Mammary epithelial cell (primary cell): ENCODE measurements at regions of chr14 and their contacts with region 1.

Region 1: GRCh38 chr14:100383727-100384158 is 60.6 kb downstream of the SLC25A47 start:
- DNase-seq: peak; percentile 35
- H3K4me3 ChIP-seq: no peak overlapping the region
- H3K27ac ChIP-seq: no peak overlapping the region
- H3K4me1 ChIP-seq: peaks cover 17% of the 10 kb centered on the region
- H3K27me3 ChIP-seq: no peaks in the 10 kb centered on the region
- CTCF ChIP-seq: peak; percentile 88 to 91

Region 2: GRCh38 chr14:100317912-100318808 is 65.6 kb before region 1 on chr14:
- CTCF ChIA-PET with region 1: no interaction called
- dilution Hi-C with region 1: no loop called
- in situ Hi-C with region 1: no loop called
- intact Hi-C with region 1: no loop called
- DNase-seq: no peak
- H3K4me3 ChIP-seq: no peak overlapping the region
- H3K27ac ChIP-seq: no peak overlapping the region
- H3K4me1 ChIP-seq: peaks cover 25% of the 10 kb centered on the region
- H3K27me3 ChIP-seq: no peaks in the 10 kb centered on the region
- CTCF ChIP-seq: peak; percentile 43 to 72

Region 3: GRCh38 chr14:100362311-100362927 is 21.3 kb before region 1 on chr14:
- CTCF ChIA-PET with region 1: no interaction called
- dilution Hi-C with region 1: no loop called
- in situ Hi-C with region 1: no loop called
- intact Hi-C with region 1: no loop called
- DNase-seq: no peak
- H3K4me3 ChIP-seq: no peak overlapping the region
- H3K27ac ChIP-seq: no peak overlapping the region
- H3K4me1 ChIP-seq: no peaks in the 10 kb centered on the region
- H3K27me3 ChIP-seq: no peaks in the 10 kb centered on the region
- CTCF ChIP-seq: no peak

Region 4: GRCh38 chr14:100417466-100417865 is 33.7 kb after region 1 on chr14:
- CTCF ChIA-PET with region 1: no interaction called
- dilution Hi-C with region 1: loop called (anchors 5 kb)
- in situ Hi-C with region 1: no loop called
- intact Hi-C with region 1: loop called (anchors 2 kb)
- DNase-seq: peak; percentile 84
- H3K4me3 ChIP-seq: no peak overlapping the region
- H3K27ac ChIP-seq: peak overlapping the region; percentile 60
- H3K4me1 ChIP-seq: peaks cover 16% of the 10 kb centered on the region
- H3K27me3 ChIP-seq: no peaks in the 10 kb centered on the region
- CTCF ChIP-seq: peak; percentile 88 to 89

Region 5: DNA sequence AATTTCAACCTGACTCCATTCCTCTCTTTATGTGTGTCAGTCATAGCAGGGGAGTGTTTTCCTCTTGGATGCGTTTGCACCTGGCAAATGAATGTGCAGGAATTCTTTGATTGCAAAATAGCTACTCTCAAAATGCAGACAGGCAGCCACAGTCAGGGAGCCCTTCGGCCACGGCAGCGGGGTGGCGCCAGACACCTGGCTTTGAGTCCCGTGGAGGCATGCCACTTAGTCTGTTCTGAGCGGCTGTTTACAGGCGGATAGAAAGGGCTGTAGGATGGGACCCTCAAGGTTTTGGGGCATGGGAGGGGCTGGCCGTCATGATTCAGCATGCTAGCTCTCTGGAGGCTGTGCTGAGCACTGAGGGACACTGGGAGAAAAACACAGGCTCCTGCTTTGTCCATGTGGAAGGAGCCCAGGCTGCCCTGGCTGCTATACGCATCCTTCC is 56.5 kb after region 1 on chr14:
- CTCF ChIA-PET with region 1: no interaction called
- dilution Hi-C with region 1: no loop called
- in situ Hi-C with region 1: no loop called
- intact Hi-C with region 1: loop called (anchors 1 kb)
- DNase-seq: peak; percentile 79
- H3K4me3 ChIP-seq: no peak overlapping the region
- H3K27ac ChIP-seq: peak overlapping the region; percentile 75
- H3K4me1 ChIP-seq: peaks cover 30% of the 10 kb centered on the region
- H3K27me3 ChIP-seq: no peaks in the 10 kb centered on the region
- CTCF ChIP-seq: peak; percentile 82 to 95

Region 6: DNA sequence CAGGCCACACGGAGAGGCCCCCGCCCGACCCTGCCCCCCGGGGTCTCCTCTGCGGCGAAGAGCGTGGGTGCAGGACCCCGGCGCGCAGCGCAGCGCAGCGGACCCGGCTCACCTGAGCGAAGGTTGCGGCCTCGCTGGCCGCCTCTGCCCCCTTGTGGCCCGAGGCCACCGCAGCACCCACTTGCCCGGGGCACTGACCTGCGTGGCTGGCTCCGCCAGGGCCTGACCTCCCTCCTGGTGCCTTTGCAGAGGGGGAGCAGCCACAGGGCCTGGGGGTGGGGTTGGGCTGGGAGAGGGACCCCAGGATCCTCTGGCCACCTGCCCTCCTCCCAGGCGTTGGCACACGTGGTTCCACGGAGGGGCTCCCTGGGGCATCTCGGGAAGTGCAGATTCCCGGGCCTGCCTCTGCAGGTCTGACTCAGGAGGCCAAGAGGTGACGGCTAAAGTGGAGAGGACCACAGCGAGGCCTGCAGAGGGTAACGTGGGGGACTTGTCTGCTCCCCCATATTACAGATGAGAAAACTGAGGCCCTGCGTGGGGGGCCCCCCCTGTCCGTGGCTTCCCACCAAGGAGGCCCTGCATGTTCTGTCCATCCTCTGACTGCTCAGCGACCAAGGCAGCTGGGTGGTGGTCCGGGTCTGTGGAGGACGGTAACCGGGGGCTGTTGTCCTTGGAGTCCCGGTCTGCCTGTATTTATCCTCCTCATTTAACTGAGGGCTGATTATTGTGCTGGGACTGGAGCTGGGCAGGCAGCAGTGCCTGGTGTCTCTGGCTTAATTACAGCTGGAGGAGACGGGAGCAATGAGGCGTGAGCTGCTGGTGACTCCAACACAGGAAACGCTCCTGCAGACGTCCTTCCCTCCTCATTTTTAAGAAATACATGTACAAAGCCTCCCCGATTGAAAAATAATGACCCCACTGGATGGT is 271.3 kb after region 1 on chr14:
- CTCF ChIA-PET with region 1: interaction called, 6 read pairs
- dilution Hi-C with region 1: loop called (anchors 5 kb)
- in situ Hi-C with region 1: loop called in 1 of 2 experiments (anchors 5 kb)
- intact Hi-C with region 1: loop called (anchors 1 kb)
- DNase-seq: peak; percentile 12
- H3K4me3 ChIP-seq: no peak overlapping the region
- H3K27ac ChIP-seq: no peak overlapping the region
- H3K4me1 ChIP-seq: peaks cover 5% of the 10 kb centered on the region
- H3K27me3 ChIP-seq: no peaks in the 10 kb centered on the region
- CTCF ChIP-seq: peak; percentile 47 to 86

Region 7: GRCh38 chr14:100900837-100901390 is 517.2 kb after region 1 on chr14:
- CTCF ChIA-PET with region 1: interaction called, 4 read pairs
- dilution Hi-C with region 1: no loop called
- in situ Hi-C with region 1: no loop called
- intact Hi-C with region 1: loop called (anchors 2 kb)
- DNase-seq: no peak
- H3K4me3 ChIP-seq: no peak overlapping the region
- H3K27ac ChIP-seq: no peak overlapping the region
- H3K4me1 ChIP-seq: no peaks in the 10 kb centered on the region
- H3K27me3 ChIP-seq: peaks cover 2% of the 10 kb centered on the region
- CTCF ChIP-seq: peak in 1 of 2 donors; percentile 29